Caco-2 (cell line): ENCODE measurements at regions of chr17 and their contacts with region 1.

Region 1: GRCh38 chr17:28763804-28764266 is 20.0 kb downstream of the TRAF4 start:
- DNase-seq: peak; percentile 80 to 87
- H3K4me3 ChIP-seq: no peak overlapping the region
- H3K4me3 Mint-ChIP-seq: no peak overlapping the region
- H3K27ac Mint-ChIP-seq: peak overlapping the region; percentile 13
- H3K4me1 ChIP-seq: no peaks in the 10 kb centered on the region
- H3K4me1 Mint-ChIP-seq: no peaks in the 10 kb centered on the region
- H3K27me3 ChIP-seq: no peaks in the 10 kb centered on the region
- H3K27me3 Mint-ChIP-seq: no peaks in the 10 kb centered on the region
- CTCF ChIP-seq: peak; percentile 85 to 88

Region 2: DNA sequence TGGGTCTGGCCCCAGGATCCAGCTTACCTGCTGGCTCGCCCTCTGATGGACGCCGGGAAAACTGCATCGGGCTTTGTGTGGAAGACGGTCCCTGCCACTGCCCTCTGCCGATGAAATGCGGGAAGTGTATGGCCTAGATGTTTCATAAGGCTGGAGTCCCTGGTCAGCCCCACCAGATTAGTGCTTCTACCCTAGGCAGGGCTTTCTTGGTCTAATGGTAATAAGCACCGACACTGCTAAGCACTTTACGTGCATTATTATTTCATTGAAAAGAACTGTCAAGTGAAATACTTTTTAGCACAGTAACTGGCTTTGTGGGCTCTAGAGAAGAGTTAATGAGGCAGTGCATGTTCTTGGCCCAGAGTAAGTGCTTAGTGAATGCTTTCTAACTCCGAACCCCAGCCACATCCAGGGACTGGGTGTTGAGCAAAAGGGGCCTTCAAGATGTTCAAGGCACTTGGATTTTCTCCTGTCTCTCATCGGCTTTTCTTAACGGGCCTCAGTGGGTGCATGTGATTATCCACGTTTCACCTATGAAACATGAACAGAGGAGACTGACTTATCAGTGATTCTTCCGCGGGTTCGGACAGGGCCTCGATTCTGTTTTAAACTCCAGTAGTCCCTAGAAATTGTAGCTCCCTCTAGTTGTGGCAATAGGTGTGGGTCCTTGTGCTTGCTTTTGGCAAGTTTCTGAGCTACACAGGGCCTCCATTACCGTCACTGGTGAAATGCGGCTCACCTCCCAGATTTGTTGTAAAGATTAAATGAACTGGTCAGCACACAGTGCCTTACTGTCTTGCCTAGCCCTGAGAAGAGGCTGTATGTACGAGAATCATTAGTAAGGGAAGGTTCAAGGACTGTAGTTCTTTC is 13.4 kb before region 1 on chr17:
- CTCF ChIA-PET with region 1: interaction called, 42 read pairs
- POLR2A ChIA-PET with region 1: no interaction called
- intact Hi-C with region 1: no loop called
- DNase-seq: peak; percentile 95 to 96
- H3K4me3 ChIP-seq: no peak overlapping the region
- H3K4me3 Mint-ChIP-seq: no peak overlapping the region
- H3K27ac Mint-ChIP-seq: no peak overlapping the region
- H3K4me1 ChIP-seq: peaks cover 28% of the 10 kb centered on the region
- H3K4me1 Mint-ChIP-seq: peaks cover 12% of the 10 kb centered on the region
- H3K27me3 ChIP-seq: no peaks in the 10 kb centered on the region
- H3K27me3 Mint-ChIP-seq: no peaks in the 10 kb centered on the region
- CTCF ChIP-seq: peak; percentile 99 to 100

Region 3: GRCh38 chr17:28842282-28843012 is 78.6 kb after region 1 on chr17 and contains the start of gene FAM222B:
- CTCF ChIA-PET with region 1: interaction called, 29 read pairs
- POLR2A ChIA-PET with region 1: no interaction called
- intact Hi-C with region 1: no loop called
- DNase-seq: peak; percentile 90 to 94
- H3K4me3 ChIP-seq: peak within 1 kb of the TSS; percentile 84
- H3K4me3 Mint-ChIP-seq: peak within 1 kb of the TSS; percentile 98
- H3K27ac Mint-ChIP-seq: peak within 1 kb of the TSS; percentile 82
- H3K4me1 ChIP-seq: peaks cover 8% of the 10 kb centered on the region
- H3K4me1 Mint-ChIP-seq: no peaks in the 10 kb centered on the region
- H3K27me3 ChIP-seq: no peaks in the 10 kb centered on the region
- H3K27me3 Mint-ChIP-seq: no peaks in the 10 kb centered on the region
- CTCF ChIP-seq: peak in 1 of 2 experiments; percentile 6
- total RNA-seq, gene FAM222B: 37.6 and 39.5 TPM in 2 replicates

Region 4: GRCh38 chr17:28878981-28879380 is 115.1 kb after region 1 on chr17:
- CTCF ChIA-PET with region 1: interaction called, 70 read pairs
- POLR2A ChIA-PET with region 1: no interaction called
- intact Hi-C with region 1: loop called (anchors 1 kb)
- DNase-seq: peak; percentile 79 to 82
- H3K4me3 ChIP-seq: no peak overlapping the region
- H3K4me3 Mint-ChIP-seq: no peak overlapping the region
- H3K27ac Mint-ChIP-seq: peak overlapping the region; percentile 30
- H3K4me1 ChIP-seq: 0 out of 2 replicates have a peak, but pooled peaks cover 6% of the 10 kb centered on the region
- H3K4me1 Mint-ChIP-seq: peaks cover 16% of the 10 kb centered on the region
- H3K27me3 ChIP-seq: no peaks in the 10 kb centered on the region
- H3K27me3 Mint-ChIP-seq: no peaks in the 10 kb centered on the region
- CTCF ChIP-seq: peak; percentile 73 to 85

Region 5: GRCh38 chr17:28902819-28903545 is 139.1 kb after region 1 on chr17 and contains the start of gene DHRS13:
- CTCF ChIA-PET with region 1: interaction called, 19 read pairs
- POLR2A ChIA-PET with region 1: interaction called, 3 read pairs
- intact Hi-C with region 1: no loop called
- DNase-seq: peak; percentile 95 to 99
- H3K4me3 ChIP-seq: peak within 1 kb of the TSS; percentile 72
- H3K4me3 Mint-ChIP-seq: peak within 1 kb of the TSS; percentile 81
- H3K27ac Mint-ChIP-seq: peak within 1 kb of the TSS; percentile 76
- H3K4me1 ChIP-seq: peaks cover 11% of the 10 kb centered on the region
- H3K4me1 Mint-ChIP-seq: peaks cover 24% of the 10 kb centered on the region
- H3K27me3 ChIP-seq: no peaks in the 10 kb centered on the region
- H3K27me3 Mint-ChIP-seq: no peaks in the 10 kb centered on the region
- CTCF ChIP-seq: peak; percentile 97 to 98
- total RNA-seq, gene DHRS13: 32.8 and 38.0 TPM in 2 replicates

Region 6: GRCh38 chr17:29005936-29006511 is 242.2 kb after region 1 on chr17 and contains the start of gene SEZ6:
- CTCF ChIA-PET with region 1: no interaction called
- POLR2A ChIA-PET with region 1: no interaction called
- intact Hi-C with region 1: no loop called
- DNase-seq: peak; percentile 82 to 92
- H3K4me3 ChIP-seq: no peak within 1 kb of the TSS
- H3K4me3 Mint-ChIP-seq: no peak within 1 kb of the TSS
- H3K27ac Mint-ChIP-seq: no peak within 1 kb of the TSS
- H3K4me1 ChIP-seq: peaks cover 5% of the 10 kb centered on the region; the same call in 1 of the 2 replicates
- H3K4me1 Mint-ChIP-seq: no peaks in the 10 kb centered on the region
- H3K27me3 ChIP-seq: no peaks in the 10 kb centered on the region; the same call in 1 of the 2 replicates
- H3K27me3 Mint-ChIP-seq: peaks cover 26% of the 10 kb centered on the region
- CTCF ChIP-seq: no peak
- total RNA-seq, gene SEZ6: not detected in 2 replicates